ENCODE measurements at regions of chr3 and their contacts with region 1.

Region 1: GRCh38 chr3:64030741-64031140 is 7.4 kb upstream of the PSMD6 start:
- DNase-seq: peak; percentile 80
- H3K4me3 ChIP-seq: peak overlapping the region in 1 of 2 donors; percentile 41
- H3K27ac ChIP-seq: no peak overlapping the region
- H3K4me1 ChIP-seq: no peaks in the 10 kb centered on the region
- H3K27me3 ChIP-seq: no peaks in the 10 kb centered on the region
- CTCF ChIP-seq: peak; percentile 82 to 93 (median 88)
- POLR2A ChIP-seq: no peak

Region 2: GRCh38 chr3:63060412-63060811 is 970.3 kb before region 1 on chr3:
- intact Hi-C with region 1: no loop called
- DNase-seq: no peak
- H3K4me3 ChIP-seq: no peak overlapping the region
- H3K27ac ChIP-seq: no peak overlapping the region
- H3K4me1 ChIP-seq: no peaks in the 10 kb centered on the region
- H3K27me3 ChIP-seq: no peaks in the 10 kb centered on the region
- CTCF ChIP-seq: no peak
- POLR2A ChIP-seq: no peak

Region 3: GRCh38 chr3:63967675-63968611 is 62.8 kb before region 1 on chr3:
- intact Hi-C with region 1: no loop called
- DNase-seq: peak; percentile 19
- H3K4me3 ChIP-seq: no peak overlapping the region
- H3K27ac ChIP-seq: peak overlapping the region in 1 of 2 donors; percentile 0
- H3K4me1 ChIP-seq: peaks cover 7% of the 10 kb centered on the region
- H3K27me3 ChIP-seq: no peaks in the 10 kb centered on the region
- CTCF ChIP-seq: no peak
- POLR2A ChIP-seq: no peak

Region 4: GRCh38 chr3:64400706-64401105 is 370.0 kb after region 1 on chr3:
- intact Hi-C with region 1: loop called (anchors 5 kb)
- DNase-seq: no peak
- H3K4me3 ChIP-seq: no peak overlapping the region
- H3K27ac ChIP-seq: no peak overlapping the region
- H3K4me1 ChIP-seq: no peaks in the 10 kb centered on the region
- H3K27me3 ChIP-seq: no peaks in the 10 kb centered on the region
- CTCF ChIP-seq: no peak
- POLR2A ChIP-seq: no peak

Region 5: GRCh38 chr3:64484289-64484992 is 453.7 kb after region 1 on chr3:
- intact Hi-C with region 1: loop called (anchors 10 kb)
- DNase-seq: peak; percentile 87
- H3K4me3 ChIP-seq: no peak overlapping the region
- H3K27ac ChIP-seq: no peak overlapping the region
- H3K4me1 ChIP-seq: no peaks in the 10 kb centered on the region
- H3K27me3 ChIP-seq: no peaks in the 10 kb centered on the region
- CTCF ChIP-seq: peak; percentile 84 to 86 (median 86)
- POLR2A ChIP-seq: no peak

Measured in testis (tissue), 5 donors.